Natural killer cell (primary cell): ENCODE measurements at regions of chr11 and their contacts with region 1.

Region 1: GRCh38 chr11:128733440-128734102 is 39.7 kb downstream of the FLI1 start:
- DNase-seq: peak in 1 of 2 donors; percentile 55
- ATAC-seq: no peak
- H3K4me3 ChIP-seq: no peak overlapping the region
- H3K4me3 Mint-ChIP-seq: peak overlapping the region; percentile 88
- H3K27ac ChIP-seq: peak overlapping the region; percentile 72
- H3K27ac Mint-ChIP-seq: peak overlapping the region; percentile 86 to 94
- H3K4me1 ChIP-seq: peaks cover 93% of the 10 kb centered on the region
- H3K4me1 Mint-ChIP-seq: peaks cover 97 to 100% of the 10 kb centered on the region in 2 donors
- H3K27me3 ChIP-seq: no peaks in the 10 kb centered on the region
- H3K27me3 Mint-ChIP-seq: no peaks in the 10 kb centered on the region
- CTCF ChIP-seq: no peak

Region 2: GRCh38 chr11:128686745-128687177 is 46.8 kb before region 1 on chr11:
- intact Hi-C with region 1: no loop called
- DNase-seq: peak; percentile 41 to 73
- ATAC-seq: peak; percentile 68 to 86 (median 80)
- H3K4me3 ChIP-seq: peak overlapping the region; percentile 35
- H3K4me3 Mint-ChIP-seq: peak overlapping the region; percentile 86
- H3K27ac ChIP-seq: no peak overlapping the region
- H3K27ac Mint-ChIP-seq: peak overlapping the region in 1 of 2 donors; percentile 69
- H3K4me1 ChIP-seq: peaks cover 30% of the 10 kb centered on the region
- H3K4me1 Mint-ChIP-seq: peaks cover 26 to 35% of the 10 kb centered on the region in 2 donors
- H3K27me3 ChIP-seq: peaks cover 31% of the 10 kb centered on the region
- H3K27me3 Mint-ChIP-seq: peaks cover 47 to 60% of the 10 kb centered on the region in 2 donors
- CTCF ChIP-seq: no peak

Region 3: DNA sequence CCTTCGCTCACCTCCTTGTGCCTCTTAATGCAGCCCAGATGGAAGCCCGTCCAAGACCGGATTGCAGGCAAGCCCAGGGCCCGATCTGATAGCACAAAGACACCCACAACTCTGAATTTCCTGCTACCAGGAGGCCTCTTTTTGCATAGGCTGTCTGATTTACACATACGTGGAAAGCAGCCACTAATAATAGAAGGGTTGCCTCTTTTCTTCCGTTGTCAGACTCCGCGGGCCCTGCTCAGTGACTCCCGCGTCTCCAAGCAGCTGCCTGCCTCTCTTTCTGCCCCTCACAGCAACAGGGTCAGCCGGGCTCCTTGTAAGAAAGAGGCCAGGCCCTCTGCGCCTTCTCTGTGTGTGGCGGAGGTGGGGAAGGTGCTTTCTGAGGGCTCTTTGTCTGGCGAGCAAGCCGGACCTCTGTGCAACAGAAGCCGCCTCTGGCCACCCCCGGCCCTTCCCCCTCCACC is 13.0 kb before region 1 on chr11:
- intact Hi-C with region 1: loop called (anchors 2 kb)
- DNase-seq: peak; percentile 57 to 71
- ATAC-seq: peak; percentile 72 to 83 (median 82)
- H3K4me3 ChIP-seq: peak overlapping the region; percentile 14
- H3K4me3 Mint-ChIP-seq: peak overlapping the region; percentile 95
- H3K27ac ChIP-seq: peak overlapping the region; percentile 81
- H3K27ac Mint-ChIP-seq: peak overlapping the region; percentile 86 to 94
- H3K4me1 ChIP-seq: peaks cover 97% of the 10 kb centered on the region
- H3K4me1 Mint-ChIP-seq: peaks cover 98% of the 10 kb centered on the region in 2 donors
- H3K27me3 ChIP-seq: no peaks in the 10 kb centered on the region
- H3K27me3 Mint-ChIP-seq: peaks cover 0 to 2% of the 10 kb centered on the region in 2 donors
- CTCF ChIP-seq: no peak

Region 4: DNA sequence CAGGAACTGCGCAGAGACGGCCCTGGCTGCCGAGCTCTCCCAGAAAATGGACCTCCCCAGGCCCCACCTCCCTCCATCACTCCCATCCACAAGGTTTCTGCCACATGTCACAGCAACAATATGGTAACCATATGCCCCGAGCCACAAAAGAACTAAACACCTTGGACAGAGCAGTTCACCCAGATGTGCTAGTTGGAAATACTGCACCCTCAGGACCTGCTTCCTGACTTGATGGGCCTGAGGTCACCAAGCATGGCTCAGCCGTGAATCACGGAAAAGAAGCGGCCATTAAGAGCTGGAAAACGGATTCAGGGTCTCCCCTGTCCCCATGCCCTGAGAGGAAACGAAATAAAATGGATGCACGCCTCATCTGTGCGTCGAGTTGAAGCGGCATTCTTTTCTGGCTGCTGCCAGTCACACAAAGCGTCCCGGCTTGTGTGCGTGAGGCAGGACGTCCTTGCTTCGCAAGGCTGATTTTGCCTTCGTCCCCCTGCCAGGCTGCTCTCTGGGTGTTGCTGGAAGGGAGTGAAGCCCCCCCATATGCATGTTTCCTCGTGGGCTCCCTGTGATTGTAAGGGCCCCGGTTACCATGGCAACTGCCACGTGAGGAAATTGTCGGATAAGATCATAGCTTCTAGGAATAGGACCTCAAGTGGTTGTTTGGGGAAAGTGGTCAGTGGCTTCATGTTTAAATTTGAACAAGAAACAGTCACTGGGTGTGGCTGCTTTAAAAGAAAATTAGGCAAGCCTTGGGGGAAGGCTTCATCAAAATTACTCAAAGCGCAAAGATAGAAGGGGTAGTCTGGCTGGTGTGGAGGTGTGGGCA is 12.0 kb after region 1 on chr11:
- intact Hi-C with region 1: loop called (anchors 2 kb)
- DNase-seq: no peak
- ATAC-seq: peak in 2 of 3 donors; percentile 16 to 54
- H3K4me3 ChIP-seq: no peak overlapping the region
- H3K4me3 Mint-ChIP-seq: no peak overlapping the region
- H3K27ac ChIP-seq: peak overlapping the region; percentile 26
- H3K27ac Mint-ChIP-seq: peak overlapping the region; percentile 95 to 97
- H3K4me1 ChIP-seq: peaks cover 75% of the 10 kb centered on the region
- H3K4me1 Mint-ChIP-seq: peaks cover 90 to 91% of the 10 kb centered on the region in 2 donors
- H3K27me3 ChIP-seq: no peaks in the 10 kb centered on the region
- H3K27me3 Mint-ChIP-seq: no peaks in the 10 kb centered on the region
- CTCF ChIP-seq: no peak